ENCODE measurements at regions of chr9 and their contacts with region 1.

Region 1: DNA sequence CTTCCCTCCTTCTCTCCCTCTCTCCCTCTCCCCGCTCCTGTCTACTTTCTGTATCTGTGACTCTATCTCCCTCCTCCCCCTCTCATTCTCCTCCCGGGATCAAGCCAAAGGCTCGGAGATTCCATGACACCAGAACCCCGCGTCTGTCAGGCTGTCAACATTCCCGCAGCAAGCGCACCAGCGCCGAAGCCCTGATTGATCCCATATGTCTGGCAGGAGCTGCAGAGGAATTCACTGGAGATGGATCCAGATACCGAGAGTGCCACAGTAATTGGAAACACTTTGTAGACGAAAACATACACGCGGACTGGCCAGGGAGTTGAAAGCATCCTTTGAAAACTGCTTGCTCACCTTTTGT is 300 bp upstream of the SVEP1 start:
- DNase-seq: peak; percentile 46
- H3K4me3 ChIP-seq: peak overlapping the region; percentile 50
- H3K27ac ChIP-seq: no peak overlapping the region
- H3K4me1 ChIP-seq: peaks cover 3% of the 10 kb centered on the region
- H3K27me3 ChIP-seq: peaks cover 44% of the 10 kb centered on the region
- CTCF ChIP-seq: no peak

Region 2: GRCh38 chr9:110256380-110257096 is 323.3 kb before region 1 on chr9 and contains the start of gene TXN:
- CTCF ChIA-PET with region 1: no interaction called
- POLR2A ChIA-PET with region 1: interaction called, 10 read pairs
- intact Hi-C with region 1: no loop called
- DNase-seq: peak; percentile 94
- H3K4me3 ChIP-seq: peak within 1 kb of the TSS; percentile 80
- H3K27ac ChIP-seq: peak within 1 kb of the TSS; percentile 87
- H3K4me1 ChIP-seq: peaks cover 26% of the 10 kb centered on the region
- H3K27me3 ChIP-seq: no peaks in the 10 kb centered on the region
- CTCF ChIP-seq: no peak
- total RNA-seq, gene TXN: 266 and 284 TPM in 2 replicates